ENCODE measurements at regions of chr2 and their contacts with region 1.

Region 1: DNA sequence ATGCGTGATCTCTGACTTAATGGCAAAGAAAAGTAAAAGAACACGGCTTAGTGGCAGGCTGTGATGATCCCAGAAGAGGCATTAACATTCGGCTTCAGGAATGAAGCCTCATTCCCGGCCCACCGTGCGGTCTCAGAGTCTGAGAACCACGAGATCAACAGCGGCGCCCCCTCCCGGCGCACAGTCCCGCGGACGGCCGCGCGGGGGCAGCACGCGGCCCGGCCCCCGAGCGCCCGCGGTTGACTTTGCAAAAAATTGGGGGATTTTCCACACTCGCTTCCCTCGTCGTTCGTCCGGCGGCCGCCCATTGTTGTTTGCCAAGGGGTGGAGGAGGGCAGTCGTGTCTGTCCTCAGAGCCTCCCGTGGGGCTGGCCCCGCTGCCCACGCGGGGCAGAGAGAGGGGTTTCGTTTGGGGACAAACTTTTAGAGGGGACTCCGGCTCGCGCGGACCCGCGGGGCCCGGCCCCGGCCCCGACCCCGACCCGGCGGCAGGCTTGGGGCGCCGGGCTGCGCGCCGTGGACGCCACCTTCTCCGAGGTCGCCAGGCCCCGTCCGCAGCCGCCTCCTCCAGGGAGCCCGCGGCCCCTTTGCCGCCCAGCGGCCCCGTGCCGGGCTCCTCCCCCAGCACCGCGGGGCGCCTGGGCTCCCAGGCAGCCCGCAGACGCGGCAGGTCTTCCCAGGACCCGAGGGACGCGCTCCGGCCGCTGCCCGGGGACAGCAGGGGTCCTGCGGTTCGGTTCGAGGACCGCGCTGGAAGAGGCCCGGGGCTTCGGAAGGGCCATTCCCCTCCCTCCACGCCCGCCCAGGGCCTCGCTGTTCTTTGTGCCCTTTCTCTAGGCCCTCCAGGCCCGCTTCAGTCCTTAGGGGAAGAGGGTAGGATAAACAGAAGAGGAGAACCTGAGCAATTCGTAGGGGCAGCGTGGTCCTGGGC is 3.4 kb upstream of the HS6ST1 start:
- DNase-seq: peak; percentile 91 to 96
- ATAC-seq: peak; percentile 89
- H3K4me3 ChIP-seq: peak overlapping the region; percentile 40 to 71
- H3K27ac ChIP-seq: peak overlapping the region in 1 of 2 donors; percentile 23
- H3K4me1 ChIP-seq: no peaks in the 10 kb centered on the region
- H3K27me3 ChIP-seq: no peaks in the 10 kb centered on the region

Region 2: DNA sequence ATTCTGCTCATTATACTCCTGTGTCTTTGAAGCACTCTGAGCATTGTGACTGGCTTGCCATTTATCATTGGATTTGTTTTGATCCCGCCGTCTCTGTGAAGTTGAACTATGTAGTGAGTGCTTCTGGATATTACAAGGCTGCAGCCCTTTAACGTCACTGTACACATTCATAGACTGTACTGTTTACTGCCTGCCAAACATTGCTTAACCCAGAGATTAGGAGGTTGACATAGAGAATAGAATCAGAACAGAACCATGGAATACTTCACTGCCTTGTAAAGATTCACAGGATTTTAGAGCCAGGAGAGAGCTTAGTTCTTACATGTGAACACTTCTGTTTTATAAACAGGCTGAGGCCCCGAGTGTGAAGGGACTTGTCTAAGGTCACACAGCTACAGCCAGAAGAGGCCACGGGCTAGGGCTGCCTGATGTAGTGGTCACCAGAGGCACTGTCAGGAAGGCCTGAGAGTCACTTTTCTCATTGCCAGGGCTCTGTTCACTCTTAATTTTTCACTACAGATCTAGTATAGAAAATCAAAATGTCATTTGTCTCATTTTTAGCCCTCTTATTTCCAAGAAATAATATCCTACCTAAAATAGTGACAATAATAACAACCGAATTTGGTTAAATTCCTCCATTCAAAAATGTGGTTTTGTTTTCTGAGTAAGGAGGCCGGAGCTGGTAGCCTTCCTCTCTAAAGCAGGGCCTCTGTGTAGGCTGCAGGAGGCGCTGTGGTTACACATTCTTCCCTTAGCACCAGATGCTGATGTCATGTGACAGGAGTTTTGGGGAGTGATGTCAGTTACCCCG is 143.2 kb before region 1 on chr2:
- intact Hi-C with region 1: loop called in 1 of 2 experiments (anchors 10 kb)
- DNase-seq: peak in 1 of 2 donors; percentile 74
- ATAC-seq: peak; percentile 75
- H3K4me3 ChIP-seq: no peak overlapping the region
- H3K27ac ChIP-seq: no peak overlapping the region
- H3K4me1 ChIP-seq: no peaks in the 10 kb centered on the region
- H3K27me3 ChIP-seq: no peaks in the 10 kb centered on the region

Region 3: GRCh38 chr2:128362846-128363228 is 40.8 kb after region 1 on chr2:
- intact Hi-C with region 1: loop called in 1 of 2 experiments (anchors 5 kb)
- DNase-seq: peak; percentile 81 to 89
- ATAC-seq: peak; percentile 22
- H3K4me3 ChIP-seq: no peak overlapping the region
- H3K27ac ChIP-seq: peak overlapping the region in 1 of 2 donors; percentile 34
- H3K4me1 ChIP-seq: no peaks in the 10 kb centered on the region
- H3K27me3 ChIP-seq: no peaks in the 10 kb centered on the region

Region 4: GRCh38 chr2:128422571-128422970 is 100.5 kb after region 1 on chr2:
- intact Hi-C with region 1: loop called in 1 of 2 experiments (anchors 5 kb)
- DNase-seq: peak; percentile 77 to 81
- ATAC-seq: peak; percentile 56
- H3K4me3 ChIP-seq: no peak overlapping the region
- H3K27ac ChIP-seq: peak overlapping the region; percentile 71 to 96
- H3K4me1 ChIP-seq: peaks cover 0 to 4% of the 10 kb centered on the region in 2 donors
- H3K27me3 ChIP-seq: no peaks in the 10 kb centered on the region

Region 5: DNA sequence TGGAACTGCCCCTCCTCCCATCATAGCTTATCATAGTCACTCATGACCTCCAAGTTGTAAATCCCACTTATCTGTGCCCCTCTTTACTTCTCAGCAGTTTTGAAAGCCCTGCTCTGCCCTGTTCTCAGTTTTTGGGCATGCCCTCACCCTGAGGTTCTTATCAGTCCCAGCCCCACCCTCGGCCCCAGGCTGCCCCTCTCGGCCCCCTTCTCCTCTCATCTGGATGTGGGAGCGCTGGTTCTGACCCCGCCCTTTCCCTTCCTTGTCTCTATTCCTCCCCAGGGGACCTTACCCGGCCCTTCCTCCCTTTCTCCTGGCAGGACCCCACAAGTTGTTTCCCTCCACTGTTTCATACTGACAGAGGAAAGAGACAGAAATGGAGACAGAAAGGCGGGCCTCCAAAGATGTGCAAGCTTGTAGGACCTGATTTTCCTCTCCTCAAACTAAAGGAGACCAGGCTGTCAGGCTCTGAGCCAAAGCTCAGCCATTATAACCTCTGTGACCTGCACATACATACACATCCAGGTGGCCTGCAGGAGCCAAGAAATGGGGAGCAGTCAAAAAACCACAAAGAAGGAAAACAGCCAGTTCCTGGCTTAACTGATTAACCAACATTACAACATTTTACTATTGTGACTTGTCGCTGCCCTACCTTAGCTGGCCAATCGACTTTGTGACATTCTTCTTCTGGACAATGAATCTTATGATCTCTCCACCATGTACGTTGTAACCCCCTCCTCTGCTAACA is 167.7 kb after region 1 on chr2:
- intact Hi-C with region 1: no loop called
- DNase-seq: no peak
- ATAC-seq: no peak
- H3K4me3 ChIP-seq: no peak overlapping the region
- H3K27ac ChIP-seq: no peak overlapping the region
- H3K4me1 ChIP-seq: no peaks in the 10 kb centered on the region
- H3K27me3 ChIP-seq: no peaks in the 10 kb centered on the region

Region 6: GRCh38 chr2:128531856-128532255 is 209.8 kb after region 1 on chr2:
- intact Hi-C with region 1: loop called (anchors 2 to 5 kb)
- DNase-seq: no peak
- ATAC-seq: no peak
- H3K4me3 ChIP-seq: no peak overlapping the region
- H3K27ac ChIP-seq: no peak overlapping the region
- H3K4me1 ChIP-seq: no peaks in the 10 kb centered on the region
- H3K27me3 ChIP-seq: no peaks in the 10 kb centered on the region